GM18951 (cell line): ENCODE measurements at regions of chr3 and their contacts with region 1.

Region 1: GRCh38 chr3:41900265-41900664 is 61.6 kb downstream of the ULK4 start:
- POLR2A ChIP-seq: no peak

Region 2: DNA sequence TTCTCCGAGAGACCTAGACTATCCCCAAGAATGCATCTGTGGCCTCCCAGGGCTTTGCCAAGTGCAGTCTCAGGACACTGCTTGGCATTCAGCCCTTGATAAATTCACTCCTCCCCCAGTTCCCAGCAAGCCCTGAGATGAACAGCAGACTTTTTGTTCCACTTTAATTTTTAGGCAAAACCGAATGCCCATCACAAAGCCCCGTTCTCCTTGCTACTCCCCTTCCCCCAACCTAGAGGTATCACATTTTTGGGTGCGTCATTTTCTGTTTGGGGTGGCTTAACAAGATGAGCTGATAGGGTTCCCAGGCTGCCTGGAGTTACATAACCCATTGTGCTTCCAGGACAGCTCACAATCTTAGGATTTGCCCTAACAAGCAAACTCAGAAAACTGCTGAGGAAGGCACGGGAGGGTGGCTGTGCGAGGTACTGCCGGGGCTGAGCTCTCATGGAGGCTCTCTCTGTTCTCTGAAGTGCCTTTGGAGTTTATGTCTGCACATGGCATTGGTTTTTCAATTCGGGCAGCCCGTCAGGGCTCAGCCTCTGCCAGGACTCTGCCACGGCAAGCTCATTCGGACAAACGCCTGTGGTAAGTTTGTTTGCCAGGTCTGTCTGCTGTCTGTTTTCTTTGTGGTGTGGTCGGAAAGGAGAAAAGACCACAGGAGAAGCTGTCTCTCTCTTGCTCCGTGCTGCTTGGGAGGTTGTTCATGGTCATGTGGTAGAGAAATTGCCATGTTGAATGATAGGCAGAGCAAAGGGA is 190.9 kb after region 1 on chr3 and contains the start of gene TRAK1:
- in situ Hi-C with region 1: loop called (anchors 10 kb)
- POLR2A ChIP-seq: no peak